PC-9 (cell line): ENCODE measurements at regions of chr9 and their contacts with region 1.

Region 1: DNA sequence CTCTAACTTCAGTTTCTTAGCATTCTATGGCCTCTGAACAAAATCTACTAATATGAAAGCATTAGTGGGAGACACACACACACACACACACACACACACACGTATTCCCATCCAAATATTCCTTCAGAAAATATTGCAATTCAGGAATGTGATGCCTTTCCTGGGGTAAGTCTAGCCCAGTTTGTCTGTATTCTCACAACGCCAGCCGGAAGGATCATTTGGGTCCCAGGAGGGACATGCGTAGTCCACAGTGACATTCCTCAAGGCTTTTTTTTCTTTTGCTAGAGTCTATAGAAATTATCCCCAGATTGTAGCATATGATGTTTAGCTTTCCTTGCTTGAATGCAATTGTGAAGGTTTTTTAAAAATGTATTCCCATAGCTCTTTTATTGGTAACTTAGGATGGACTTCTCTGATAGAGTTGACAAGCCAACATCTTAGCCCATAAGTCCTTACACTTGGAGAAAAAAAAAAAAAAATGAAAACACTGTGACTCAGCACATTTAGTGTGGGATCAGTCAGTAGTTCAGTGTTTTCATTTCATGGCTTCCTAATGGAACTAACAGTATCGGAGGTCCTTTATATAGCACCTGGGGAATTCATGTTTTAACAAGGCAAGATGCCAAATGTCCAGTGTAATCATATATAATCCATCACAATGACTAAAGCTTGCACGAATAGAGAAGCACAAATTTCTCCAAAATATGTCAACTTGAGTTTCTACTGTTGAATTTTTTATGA is 316.5 kb downstream of the DIRAS2 start:
- DNase-seq: no peak
- H3K4me3 ChIP-seq: no peak overlapping the region
- H3K27ac ChIP-seq: peak overlapping the region; percentile 44
- H3K4me1 ChIP-seq: peaks cover 18% of the 10 kb centered on the region
- H3K27me3 ChIP-seq: no peaks in the 10 kb centered on the region
- CTCF ChIP-seq: no peak

Region 2: GRCh38 chr9:90287567-90288274 is 38.4 kb before region 1 on chr9:
- CTCF ChIA-PET with region 1: no interaction called
- POLR2A ChIA-PET with region 1: no interaction called
- intact Hi-C with region 1: no loop called
- DNase-seq: peak in 1 of 2 experiments; percentile 19
- H3K4me3 ChIP-seq: no peak overlapping the region
- H3K27ac ChIP-seq: no peak overlapping the region
- H3K4me1 ChIP-seq: no peaks in the 10 kb centered on the region
- H3K27me3 ChIP-seq: no peaks in the 10 kb centered on the region
- CTCF ChIP-seq: no peak

Region 3: GRCh38 chr9:90613502-90613901 is 287.4 kb after region 1 on chr9:
- CTCF ChIA-PET with region 1: interaction called, 11 read pairs
- POLR2A ChIA-PET with region 1: no interaction called
- intact Hi-C with region 1: no loop called
- DNase-seq: no peak
- H3K4me3 ChIP-seq: no peak overlapping the region
- H3K27ac ChIP-seq: no peak overlapping the region
- H3K4me1 ChIP-seq: no peaks in the 10 kb centered on the region
- H3K27me3 ChIP-seq: no peaks in the 10 kb centered on the region; the same call in 1 of the 2 replicates
- CTCF ChIP-seq: no peak